Naive thymus-derived CD4-positive, alpha-beta T cell (primary cell): ENCODE measurements at regions of chr1 and their contacts with region 1.

Region 1: DNA sequence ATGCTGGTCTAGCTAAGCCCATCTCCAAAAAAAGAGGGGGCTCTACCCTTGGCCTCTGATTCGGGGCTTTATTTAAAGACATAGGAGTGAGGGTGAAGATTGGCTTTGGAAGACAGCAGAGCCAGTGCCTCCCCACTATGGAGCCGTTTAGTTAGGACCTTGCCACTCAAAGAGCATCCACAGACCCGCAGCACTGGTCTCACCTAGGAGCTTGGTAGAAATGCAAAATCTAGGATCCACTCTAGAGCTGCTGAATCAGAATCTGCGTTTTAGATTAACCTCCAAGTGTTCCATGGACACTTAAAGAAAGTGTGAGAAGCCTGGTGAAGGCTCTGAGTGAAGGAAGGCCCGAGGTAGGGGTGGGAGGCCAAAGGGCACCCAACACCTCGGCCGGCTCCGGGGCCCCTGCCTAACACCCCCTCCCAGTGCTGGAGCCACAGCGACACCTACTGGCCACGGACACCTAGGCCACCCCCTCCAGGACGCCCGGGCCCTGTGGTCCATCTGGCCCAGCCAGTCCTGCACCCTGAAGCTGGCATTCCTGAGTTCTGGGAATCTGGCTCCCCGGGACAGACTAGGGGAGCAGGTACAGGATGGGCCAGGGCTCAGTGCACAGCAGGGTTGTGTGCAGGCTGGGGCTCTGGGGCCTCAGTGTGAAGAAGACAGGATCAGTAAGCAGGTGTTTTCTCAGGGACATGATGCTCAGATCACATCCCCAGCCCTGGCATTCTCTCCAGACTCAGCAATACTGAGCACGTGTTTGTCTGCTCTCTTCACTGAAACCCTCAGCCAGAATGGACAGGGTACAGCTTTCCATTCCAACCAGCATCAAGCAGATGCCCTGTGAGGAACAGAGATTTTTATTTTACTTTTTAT is 79.2 kb downstream of the TMEM53 start:
- DNase-seq: peak; percentile 27 to 82 (median 62)
- ATAC-seq: peak; percentile 92
- H3K4me3 ChIP-seq: no peak overlapping the region
- H3K4me3 Mint-ChIP-seq: no peak overlapping the region
- H3K27ac ChIP-seq: no peak overlapping the region
- H3K27ac Mint-ChIP-seq: no peak overlapping the region
- H3K4me1 ChIP-seq: no peaks in the 10 kb centered on the region
- H3K4me1 Mint-ChIP-seq: peaks cover 0 to 4% (median 0%) of the 10 kb centered on the region in 7 donors
- H3K27me3 ChIP-seq: no peaks in the 10 kb centered on the region
- H3K27me3 Mint-ChIP-seq: peaks cover 0 to 4% (median 2%) of the 10 kb centered on the region in 5 donors

Region 2: GRCh38 chr1:44377925-44378784 is 217.0 kb before region 1 on chr1:
- CTCF ChIA-PET with region 1: interaction called, 8 read pairs
- POLR2A ChIA-PET with region 1: no interaction called
- intact Hi-C with region 1: loop called in 1 of 2 experiments (anchors 1 kb)
- DNase-seq: peak in 8 of 9 donors; percentile 3 to 43 (median 29)
- ATAC-seq: peak; percentile 66
- H3K4me3 ChIP-seq: no peak overlapping the region
- H3K4me3 Mint-ChIP-seq: no peak overlapping the region
- H3K27ac ChIP-seq: no peak overlapping the region
- H3K27ac Mint-ChIP-seq: no peak overlapping the region
- H3K4me1 ChIP-seq: no peaks in the 10 kb centered on the region
- H3K4me1 Mint-ChIP-seq: peaks cover 0 to 2% (median 0%) of the 10 kb centered on the region in 7 donors
- H3K27me3 ChIP-seq: no peaks in the 10 kb centered on the region
- H3K27me3 Mint-ChIP-seq: peaks cover 0 to 8% (median 0%) of the 10 kb centered on the region in 5 donors

Region 3: DNA sequence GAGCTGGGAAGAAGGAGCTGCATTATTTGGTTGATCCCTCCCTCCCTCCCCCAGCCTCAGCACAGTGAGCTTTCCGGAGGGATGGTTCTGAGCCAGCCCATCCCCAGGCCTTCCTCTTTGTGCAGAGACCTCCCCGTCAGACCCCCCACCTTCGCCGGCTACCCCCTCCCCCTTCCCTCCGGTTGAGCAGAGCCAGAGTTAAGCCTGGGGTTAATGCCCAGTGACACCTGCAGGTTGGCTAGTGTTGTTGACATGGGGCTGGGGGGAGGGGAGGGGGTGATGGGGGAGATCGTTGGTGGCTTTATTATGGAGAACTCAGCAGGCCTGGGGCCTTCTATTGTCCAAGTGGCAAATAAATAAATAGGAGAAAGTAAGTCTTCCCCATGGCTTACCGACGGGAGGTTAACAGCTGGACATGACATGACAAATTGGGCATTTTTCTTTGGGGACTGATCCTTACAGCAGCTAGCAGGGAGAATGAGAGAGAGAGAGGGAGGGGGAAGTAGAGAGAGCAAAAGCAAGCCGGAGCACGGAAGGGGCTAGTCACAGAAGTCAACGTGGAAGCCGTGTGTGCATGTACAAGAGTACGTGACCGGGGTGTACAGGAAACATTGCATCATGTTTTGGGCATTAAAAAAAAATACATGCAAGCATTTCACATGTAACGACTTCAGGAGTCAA is 51.9 kb before region 1 on chr1:
- CTCF ChIA-PET with region 1: no interaction called
- POLR2A ChIA-PET with region 1: no interaction called
- intact Hi-C with region 1: no loop called
- DNase-seq: no peak
- ATAC-seq: peak; percentile 51
- H3K4me3 ChIP-seq: no peak overlapping the region
- H3K4me3 Mint-ChIP-seq: no peak overlapping the region
- H3K27ac ChIP-seq: no peak overlapping the region
- H3K27ac Mint-ChIP-seq: no peak overlapping the region
- H3K4me1 ChIP-seq: no peaks in the 10 kb centered on the region
- H3K4me1 Mint-ChIP-seq: peaks cover 0 to 2% (median 0%) of the 10 kb centered on the region in 7 donors
- H3K27me3 ChIP-seq: no peaks in the 10 kb centered on the region
- H3K27me3 Mint-ChIP-seq: peaks cover 9 to 27% (median 19%) of the 10 kb centered on the region in 5 donors